AG04450 (cell line): ENCODE measurements at regions of chr6 and their contacts with region 1.

Region 1: DNA sequence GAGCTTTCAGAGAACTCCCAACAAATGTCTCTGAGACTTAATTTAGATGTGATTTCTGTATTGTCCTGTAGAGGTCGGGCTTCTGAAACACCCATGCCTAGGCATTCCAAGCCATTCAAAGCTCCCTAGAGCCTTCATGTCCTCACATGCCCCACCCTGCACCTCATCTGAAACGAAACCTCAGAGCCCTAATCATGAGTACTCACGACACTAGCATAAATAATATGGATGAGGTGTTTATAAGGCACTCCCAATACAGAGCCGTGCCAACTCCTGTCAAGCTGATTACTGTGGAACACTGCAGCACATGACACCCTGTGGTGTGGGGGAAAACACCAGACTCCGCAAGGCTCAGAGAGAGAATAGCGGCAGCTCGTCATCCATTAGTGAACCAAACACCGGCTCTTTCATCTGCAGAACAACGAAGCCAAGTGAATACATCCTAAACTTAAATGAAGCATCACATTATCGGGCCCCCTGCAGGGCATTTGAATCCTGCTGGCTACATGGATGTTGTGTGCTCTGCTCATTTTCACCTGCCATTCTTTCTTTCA is 83.8 kb downstream of the FNDC1 start:
- DNase-seq: peak; percentile 4
- H3K4me3 ChIP-seq: no peak overlapping the region
- H3K27ac ChIP-seq: no peak overlapping the region
- H3K27me3 ChIP-seq: no peaks in the 10 kb centered on the region
- CTCF ChIP-seq: peak; percentile 62

Region 2: GRCh38 chr6:158758451-158758861 is 494.6 kb before region 1 on chr6:
- CTCF ChIA-PET with region 1: no interaction called
- POLR2A ChIA-PET with region 1: no interaction called
- DNase-seq: no peak
- H3K4me3 ChIP-seq: no peak overlapping the region
- H3K27ac ChIP-seq: no peak overlapping the region
- H3K27me3 ChIP-seq: no peaks in the 10 kb centered on the region
- CTCF ChIP-seq: no peak

Region 3: GRCh38 chr6:159233365-159234101 is 19.5 kb before region 1 on chr6:
- CTCF ChIA-PET with region 1: interaction called, 22 read pairs
- POLR2A ChIA-PET with region 1: no interaction called
- DNase-seq: no peak
- H3K4me3 ChIP-seq: no peak overlapping the region
- H3K27ac ChIP-seq: no peak overlapping the region
- H3K27me3 ChIP-seq: peaks cover 4% of the 10 kb centered on the region
- CTCF ChIP-seq: no peak

Region 4: GRCh38 chr6:159238920-159239558 is 14.0 kb before region 1 on chr6:
- CTCF ChIA-PET with region 1: interaction called, 22 read pairs
- POLR2A ChIA-PET with region 1: no interaction called
- DNase-seq: no peak
- H3K4me3 ChIP-seq: no peak overlapping the region
- H3K27ac ChIP-seq: no peak overlapping the region
- H3K27me3 ChIP-seq: peaks cover 3% of the 10 kb centered on the region
- CTCF ChIP-seq: no peak

Region 5: DNA sequence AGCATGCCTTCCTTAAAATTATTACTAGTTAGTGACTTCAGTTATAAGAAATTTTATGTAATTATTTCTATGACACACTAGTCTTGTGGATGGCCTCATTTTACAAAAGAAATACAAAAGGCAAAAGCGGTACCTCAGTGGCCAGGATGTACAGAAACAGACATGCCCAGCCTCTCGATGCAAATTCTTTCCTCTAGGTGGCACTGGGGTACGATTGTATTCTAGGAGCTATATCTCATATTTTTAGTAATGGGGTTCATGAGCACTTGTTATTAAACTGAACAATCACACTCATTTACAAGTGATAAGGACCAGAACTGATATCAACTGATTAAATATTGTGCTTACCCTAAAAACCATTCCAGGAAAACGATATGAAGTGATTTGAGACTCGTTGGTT is 380.2 kb after region 1 on chr6:
- CTCF ChIA-PET with region 1: interaction called, 11 read pairs
- POLR2A ChIA-PET with region 1: no interaction called
- DNase-seq: no peak
- H3K4me3 ChIP-seq: no peak overlapping the region
- H3K27ac ChIP-seq: no peak overlapping the region
- H3K27me3 ChIP-seq: no peaks in the 10 kb centered on the region
- CTCF ChIP-seq: peak; percentile 65